BJ (cell line): ENCODE measurements at regions of chr4 and their contacts with region 1.

Region 1: GRCh38 chr4:124684301-124684700 is 28.2 kb downstream of the ANKRD50 start:
- DNase-seq: no peak
- H3K4me3 ChIP-seq: no peak overlapping the region
- H3K27me3 ChIP-seq: no peaks in the 10 kb centered on the region
- CTCF ChIP-seq: no peak

Region 2: DNA sequence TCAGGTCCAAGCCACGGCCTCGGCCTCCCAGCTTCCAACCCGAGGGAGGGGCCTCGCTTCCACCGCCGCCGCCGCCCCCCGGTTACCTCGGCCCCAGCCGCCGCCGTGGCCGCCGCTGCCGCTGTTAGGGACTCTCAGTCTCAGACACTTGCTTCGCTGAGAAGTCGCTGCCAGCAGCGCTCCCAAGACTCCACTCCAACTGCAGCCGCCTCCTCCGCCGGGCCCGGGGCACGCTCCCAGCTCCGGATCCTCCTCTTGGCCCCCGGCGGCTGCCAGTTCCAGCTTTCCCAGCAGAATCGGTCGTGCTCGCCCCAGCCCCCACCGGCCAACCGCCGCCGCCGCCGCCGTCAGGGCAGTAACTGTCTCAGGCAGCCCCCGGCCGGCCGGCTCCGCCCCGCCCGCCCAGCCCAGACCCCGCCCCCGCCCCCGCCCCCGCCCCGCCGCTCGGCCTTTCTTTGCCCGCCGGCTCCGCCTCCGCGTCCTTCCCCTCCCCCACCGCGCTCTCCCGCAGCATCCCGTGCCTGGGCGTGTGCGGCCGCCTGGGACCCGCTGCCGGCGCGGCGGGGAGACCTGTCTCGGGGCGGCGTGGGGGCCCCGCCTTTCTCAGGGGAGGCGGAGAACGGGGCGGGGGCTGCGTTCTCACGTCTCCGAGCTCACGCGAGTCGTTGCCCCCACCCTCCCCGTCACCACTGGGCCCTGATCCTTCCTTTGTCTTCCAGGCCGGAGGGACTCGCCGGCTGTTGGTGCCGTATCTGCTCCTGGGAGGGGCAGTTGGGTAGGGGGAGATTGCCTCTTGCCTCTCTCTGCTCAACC is 28.3 kb after region 1 on chr4 and contains the start of gene ANKRD50:
- CTCF ChIA-PET with region 1: no interaction called
- POLR2A ChIA-PET with region 1: interaction called, 12 read pairs
- DNase-seq: peak; percentile 62
- H3K4me3 ChIP-seq: peak within 1 kb of the TSS; percentile 80
- H3K27me3 ChIP-seq: no peaks in the 10 kb centered on the region
- CTCF ChIP-seq: no peak
- polyA plus RNA-seq, gene ANKRD50: 6.5 and 14.5 TPM in 2 replicates